ENCODE measurements at regions of chr7 and their contacts with region 1.

Region 1: GRCh38 chr7:105013221-105013815 is 687 bp upstream of the KMT2E start:
- DNase-seq: peak; percentile 95
- H3K4me3 Mint-ChIP-seq: peak overlapping the region; percentile 97
- H3K27ac Mint-ChIP-seq: peak overlapping the region; percentile 100
- H3K4me1 Mint-ChIP-seq: peaks cover 34% of the 10 kb centered on the region
- H3K27me3 Mint-ChIP-seq: no peaks in the 10 kb centered on the region

Region 2: GRCh38 chr7:104943502-104944343 is 69.6 kb before region 1 on chr7:
- CTCF ChIA-PET with region 1: interaction called, 7 read pairs
- POLR2A ChIA-PET with region 1: interaction called, 364 read pairs
- DNase-seq: peak; percentile 80
- H3K4me3 Mint-ChIP-seq: peak overlapping the region; percentile 82
- H3K27ac Mint-ChIP-seq: peak overlapping the region; percentile 98
- H3K4me1 Mint-ChIP-seq: peaks cover 71% of the 10 kb centered on the region
- H3K27me3 Mint-ChIP-seq: no peaks in the 10 kb centered on the region

Region 3: DNA sequence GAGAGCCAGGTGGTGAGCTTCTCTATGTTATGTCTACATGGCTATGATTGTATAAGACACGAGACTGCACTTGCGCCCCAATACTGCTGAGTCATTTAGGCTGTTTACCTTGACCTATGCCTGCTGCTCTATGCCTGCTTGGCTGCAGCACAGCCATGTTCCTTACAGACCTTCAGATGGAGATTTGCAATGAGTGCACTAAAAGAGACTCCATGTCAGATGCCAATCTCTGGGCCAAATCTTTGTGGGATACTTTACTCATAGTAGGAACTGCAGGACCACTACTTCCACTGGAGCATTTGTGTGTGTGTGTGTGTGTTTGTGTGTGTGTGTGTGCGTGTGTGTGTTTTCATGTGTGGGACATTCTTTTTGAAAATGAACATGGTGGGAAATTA is 49.3 kb before region 1 on chr7:
- CTCF ChIA-PET with region 1: interaction called, 3 read pairs
- POLR2A ChIA-PET with region 1: interaction called, 27 read pairs
- DNase-seq: no peak
- H3K4me3 Mint-ChIP-seq: no peak overlapping the region
- H3K27ac Mint-ChIP-seq: no peak overlapping the region
- H3K4me1 Mint-ChIP-seq: peaks cover 25% of the 10 kb centered on the region
- H3K27me3 Mint-ChIP-seq: no peaks in the 10 kb centered on the region

Region 4: DNA sequence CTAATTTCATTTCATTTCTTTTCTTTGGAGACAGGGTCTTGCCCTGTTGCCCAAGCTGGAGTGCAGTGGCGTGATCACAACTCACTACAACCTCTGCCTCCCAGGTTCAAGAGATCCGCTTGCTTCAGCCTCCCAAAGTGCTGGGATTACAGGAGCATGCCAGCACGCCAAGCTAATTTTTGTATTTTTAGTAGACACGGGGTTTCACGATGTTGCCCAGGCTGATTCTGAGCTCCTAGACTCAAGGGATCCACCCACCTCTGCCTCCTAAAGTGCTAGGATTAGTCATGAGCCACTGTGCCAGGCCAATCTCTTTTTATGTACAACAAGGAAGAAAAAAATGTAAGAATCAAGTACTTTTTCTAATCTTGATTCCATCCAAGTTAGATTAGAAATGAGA is 10.0 kb before region 1 on chr7:
- CTCF ChIA-PET with region 1: interaction called, 5 read pairs
- POLR2A ChIA-PET with region 1: interaction called, 50 read pairs
- DNase-seq: peak; percentile 34
- H3K4me3 Mint-ChIP-seq: peak overlapping the region; percentile 43
- H3K27ac Mint-ChIP-seq: peak overlapping the region; percentile 61
- H3K4me1 Mint-ChIP-seq: peaks cover 84% of the 10 kb centered on the region
- H3K27me3 Mint-ChIP-seq: no peaks in the 10 kb centered on the region

Region 5: DNA sequence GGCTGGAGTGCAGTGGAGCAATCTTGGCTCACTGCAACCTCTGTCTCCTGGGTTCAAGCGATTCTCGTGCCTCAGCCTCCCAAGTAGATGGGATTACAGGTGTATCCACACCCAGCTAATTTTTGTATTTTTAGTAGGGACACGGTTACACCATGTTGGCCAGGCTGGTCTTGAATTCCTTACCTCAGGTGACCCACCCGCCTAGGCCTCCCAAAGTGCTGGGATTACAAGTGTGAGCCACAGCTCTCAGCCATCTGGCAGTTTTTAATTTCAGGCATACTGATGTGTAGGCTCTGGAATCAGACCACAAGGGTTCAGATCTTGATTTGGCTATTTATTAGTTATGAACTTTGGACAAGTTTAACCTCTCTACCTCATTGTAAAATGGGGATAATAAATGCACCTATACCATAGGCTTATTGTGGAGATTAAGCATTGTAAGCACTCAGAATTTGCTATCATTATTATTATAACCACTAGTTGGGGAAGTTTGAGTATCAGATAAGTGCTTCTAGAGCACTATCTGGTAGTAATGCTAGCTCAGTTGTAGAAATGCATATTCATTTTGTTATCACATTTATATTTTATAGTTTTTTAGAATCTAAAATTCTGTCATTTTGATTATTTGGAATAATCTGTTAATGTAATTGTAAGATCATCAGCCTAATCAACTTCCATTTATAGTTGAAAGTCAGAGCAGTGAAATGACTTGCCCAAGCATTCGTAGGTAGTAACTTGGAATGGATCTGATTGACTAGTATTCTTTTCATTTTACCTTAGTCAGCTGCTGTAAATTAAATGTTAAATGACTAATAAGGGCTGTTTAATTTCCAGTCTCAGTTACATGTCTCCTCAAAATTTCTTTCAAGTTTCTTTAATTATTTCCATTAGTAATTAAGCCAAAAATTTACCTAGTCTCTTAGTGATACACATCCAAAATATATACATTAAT is 23.2 kb after region 1 on chr7:
- CTCF ChIA-PET with region 1: interaction called, 6 read pairs
- POLR2A ChIA-PET with region 1: interaction called, 92 read pairs
- DNase-seq: no peak
- H3K4me3 Mint-ChIP-seq: no peak overlapping the region
- H3K27ac Mint-ChIP-seq: no peak overlapping the region
- H3K4me1 Mint-ChIP-seq: peaks cover 45% of the 10 kb centered on the region
- H3K27me3 Mint-ChIP-seq: no peaks in the 10 kb centered on the region

Region 6: GRCh38 chr7:105178177-105178576 is 164.9 kb after region 1 on chr7:
- CTCF ChIA-PET with region 1: no interaction called
- POLR2A ChIA-PET with region 1: no interaction called
- DNase-seq: no peak
- H3K4me3 Mint-ChIP-seq: no peak overlapping the region
- H3K27ac Mint-ChIP-seq: no peak overlapping the region
- H3K4me1 Mint-ChIP-seq: no peaks in the 10 kb centered on the region
- H3K27me3 Mint-ChIP-seq: no peaks in the 10 kb centered on the region

Region 7: DNA sequence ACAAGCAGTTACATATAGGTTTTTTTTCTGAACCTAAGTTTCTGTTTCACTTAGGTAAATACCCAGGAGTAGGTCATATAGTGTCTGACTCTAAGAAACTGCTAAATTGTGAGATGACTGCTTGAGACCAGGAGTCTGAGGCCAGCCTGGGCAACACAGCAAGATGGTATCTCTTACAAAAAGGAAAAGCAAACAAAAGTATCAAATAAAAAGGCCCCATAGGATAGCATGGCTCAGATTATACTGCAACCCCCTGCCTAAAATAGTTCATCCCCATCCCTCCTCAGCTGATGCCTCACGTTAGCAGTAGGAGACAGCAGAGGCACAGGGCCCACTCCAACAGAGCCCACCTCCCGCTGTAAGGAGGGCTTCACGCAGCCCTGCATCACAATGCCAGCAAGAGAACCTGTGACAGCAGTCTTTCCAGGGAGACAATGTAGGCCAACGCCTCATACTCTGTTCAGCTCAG is 285.2 kb after region 1 on chr7:
- CTCF ChIA-PET with region 1: no interaction called
- POLR2A ChIA-PET with region 1: interaction called, 30 read pairs
- DNase-seq: peak; percentile 51
- H3K4me3 Mint-ChIP-seq: peak overlapping the region; percentile 16
- H3K27ac Mint-ChIP-seq: peak overlapping the region; percentile 76
- H3K4me1 Mint-ChIP-seq: peaks cover 62% of the 10 kb centered on the region
- H3K27me3 Mint-ChIP-seq: no peaks in the 10 kb centered on the region

Region 8: GRCh38 chr7:105531792-105532671 is 518.7 kb after region 1 on chr7 and contains the start of gene RINT1:
- CTCF ChIA-PET with region 1: interaction called, 7 read pairs
- POLR2A ChIA-PET with region 1: interaction called, 34 read pairs
- DNase-seq: peak; percentile 92
- H3K4me3 Mint-ChIP-seq: peak within 1 kb of the TSS; percentile 81
- H3K27ac Mint-ChIP-seq: peak within 1 kb of the TSS; percentile 88
- H3K4me1 Mint-ChIP-seq: peaks cover 43% of the 10 kb centered on the region
- H3K27me3 Mint-ChIP-seq: no peaks in the 10 kb centered on the region
- total RNA-seq, gene RINT1: 20.5 to 21.9 TPM

Measured in activated CD4-positive, alpha-beta memory T cell treated with anti-CD3 and anti-CD28 coated beads, Interleukin-2, amount 10 ng/mL, durations not matched to agents 7 days and 5 days (primary cell).